ENCODE measurements at regions of chr1 and their contacts with region 1.

Region 1: GRCh38 chr1:169601093-169601881 is 15.0 kb upstream of the F5 start:
- DNase-seq: peak; percentile 41 to 57 (median 52)
- H3K4me3 ChIP-seq: no peak overlapping the region
- H3K27ac ChIP-seq: no peak overlapping the region
- H3K4me1 ChIP-seq: peaks cover 21 to 44% (median 28%) of the 10 kb centered on the region in 4 experiments
- H3K27me3 ChIP-seq: no peaks in the 10 kb centered on the region

Region 2: GRCh38 chr1:169586395-169587255 is 14.7 kb before region 1 on chr1 and contains the start of gene F5:
- CTCF ChIA-PET with region 1: interaction called, 35 read pairs
- POLR2A ChIA-PET with region 1: no interaction called
- DNase-seq: peak; percentile 78 to 89 (median 85)
- H3K4me3 ChIP-seq: peak within 1 kb of the TSS in 6 of 7 experiments; percentile 34 to 77 (median 56)
- H3K27ac ChIP-seq: no peak within 1 kb of the TSS
- H3K4me1 ChIP-seq: peaks cover 2 to 22% (median 15%) of the 10 kb centered on the region in 4 experiments
- H3K27me3 ChIP-seq: no peaks in the 10 kb centered on the region

Region 3: DNA sequence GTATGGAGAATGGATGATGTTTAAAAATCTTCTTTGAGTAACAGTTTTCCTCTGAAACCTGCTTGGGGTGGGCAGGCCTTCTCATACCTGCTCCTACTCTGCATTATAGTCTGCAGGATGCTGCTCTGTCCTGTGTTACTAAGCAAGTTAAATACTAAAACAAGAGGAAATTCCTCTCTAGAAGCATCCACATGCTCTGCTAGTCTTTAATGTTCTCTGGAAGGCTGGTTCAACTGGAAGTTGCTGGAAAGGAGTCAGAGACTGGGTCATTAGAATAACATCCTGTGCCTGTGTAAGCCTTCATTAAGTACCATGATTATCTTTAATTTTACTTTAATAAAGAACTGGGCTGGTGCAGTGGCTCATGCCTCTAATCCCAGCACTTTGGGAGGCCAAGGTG is 22.8 kb after region 1 on chr1:
- CTCF ChIA-PET with region 1: interaction called, 11 read pairs
- POLR2A ChIA-PET with region 1: no interaction called
- DNase-seq: no peak
- H3K4me3 ChIP-seq: no peak overlapping the region
- H3K27ac ChIP-seq: no peak overlapping the region
- H3K4me1 ChIP-seq: peaks cover 10 to 47% (median 24%) of the 10 kb centered on the region in 4 experiments
- H3K27me3 ChIP-seq: no peaks in the 10 kb centered on the region

Region 4: DNA sequence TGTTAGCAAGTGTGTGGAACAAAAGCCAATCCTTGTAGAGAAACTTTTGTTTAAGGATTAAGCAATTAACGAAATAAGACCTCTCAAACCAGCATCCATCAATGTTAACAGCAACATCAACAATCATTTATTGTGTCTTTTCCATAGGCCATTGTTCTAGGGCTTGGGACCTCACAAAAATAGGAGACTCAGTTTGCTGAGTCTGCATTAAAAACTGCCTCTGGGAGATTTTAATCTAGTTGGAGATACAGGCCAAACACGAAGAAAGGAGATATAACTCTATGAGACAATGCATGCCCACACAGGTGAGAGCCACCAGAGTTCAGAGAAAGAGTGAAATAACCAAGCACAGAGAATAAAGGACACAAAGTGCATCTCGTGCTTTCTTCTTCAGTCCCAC is 43.0 kb after region 1 on chr1:
- CTCF ChIA-PET with region 1: interaction called, 10 read pairs
- POLR2A ChIA-PET with region 1: no interaction called
- DNase-seq: no peak
- H3K4me3 ChIP-seq: no peak overlapping the region
- H3K27ac ChIP-seq: no peak overlapping the region
- H3K4me1 ChIP-seq: peaks cover 3 to 24% (median 13%) of the 10 kb centered on the region in 4 experiments
- H3K27me3 ChIP-seq: no peaks in the 10 kb centered on the region

Region 5: DNA sequence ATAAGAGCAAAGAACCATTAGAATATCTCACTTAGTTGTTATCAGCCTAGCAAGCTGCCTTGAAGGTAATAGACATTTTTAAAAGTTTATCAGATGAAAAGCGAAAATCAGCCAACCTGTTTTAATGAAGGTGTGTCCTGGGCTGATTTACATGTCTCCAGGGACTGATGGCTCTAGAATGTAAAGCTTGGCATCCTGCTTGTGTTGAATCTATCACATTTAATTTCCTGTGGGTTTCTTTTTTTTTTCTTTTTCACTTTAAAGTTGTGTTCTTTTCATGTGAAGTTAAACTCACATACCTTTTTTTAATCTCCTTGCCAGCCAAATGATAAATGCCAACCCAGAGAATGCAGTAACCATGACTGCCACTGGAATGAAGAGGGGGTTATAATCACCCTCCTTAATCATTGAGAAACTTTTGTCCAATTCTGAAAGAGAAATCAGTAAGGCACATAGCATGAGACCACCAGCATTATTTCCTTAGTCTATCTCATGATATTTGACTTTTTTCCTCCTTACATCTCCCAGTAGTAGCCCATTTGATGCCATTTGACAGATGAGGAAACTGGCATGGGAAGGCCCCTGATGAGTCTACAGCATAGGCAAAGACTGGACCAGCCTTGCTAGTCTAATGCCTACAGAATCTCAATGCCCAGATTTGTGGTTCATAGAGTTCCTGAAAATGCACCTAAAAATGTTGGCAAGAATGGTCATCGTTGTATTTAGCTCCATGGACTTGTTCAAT is 100.1 kb after region 1 on chr1:
- CTCF ChIA-PET with region 1: interaction called, 71 read pairs
- POLR2A ChIA-PET with region 1: interaction called, 6 read pairs
- DNase-seq: no peak
- H3K4me3 ChIP-seq: peak overlapping the region in 1 of 7 experiments; percentile 7
- H3K27ac ChIP-seq: peak overlapping the region in 1 of 2 experiments; percentile 55
- H3K4me1 ChIP-seq: peaks cover 53 to 98% (median 72%) of the 10 kb centered on the region in 4 experiments
- H3K27me3 ChIP-seq: no peaks in the 10 kb centered on the region

Region 6: DNA sequence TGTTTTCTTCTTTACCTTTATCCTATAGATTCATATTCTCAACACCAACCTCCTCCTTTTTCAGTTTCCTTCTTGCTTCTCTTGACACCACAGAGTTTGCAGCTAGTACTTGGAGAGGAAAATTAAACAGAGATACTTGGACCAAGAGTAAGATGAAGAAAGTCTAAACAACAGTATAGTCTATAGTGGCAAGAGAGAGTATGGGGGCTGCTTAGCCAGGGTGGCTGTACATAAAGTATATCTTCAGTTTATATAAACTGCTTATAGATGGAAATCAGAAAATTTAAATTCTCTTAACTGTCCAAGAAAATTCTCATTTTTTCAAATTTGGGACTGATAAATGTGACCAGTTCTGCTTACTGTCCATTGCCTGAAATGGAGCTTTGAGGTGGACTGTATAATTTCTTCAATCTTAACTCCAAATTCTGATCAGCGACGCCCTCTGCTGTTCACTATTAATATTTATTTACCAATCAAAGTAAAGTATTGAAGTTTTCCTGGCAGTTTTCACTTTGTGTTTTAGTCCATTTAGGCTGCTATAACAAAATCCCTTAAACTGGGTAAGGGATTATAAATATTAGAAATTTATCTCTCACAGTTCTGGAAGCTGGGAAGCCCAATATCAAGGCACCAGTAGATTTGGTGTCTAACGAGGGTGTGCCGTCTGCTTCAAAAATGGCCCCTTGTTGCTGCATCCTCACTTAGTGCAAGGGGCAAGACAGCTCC is 208.2 kb after region 1 on chr1:
- CTCF ChIA-PET with region 1: interaction called, 27 read pairs
- POLR2A ChIA-PET with region 1: no interaction called
- DNase-seq: peak; percentile 43 to 69 (median 58)
- H3K4me3 ChIP-seq: no peak overlapping the region
- H3K27ac ChIP-seq: no peak overlapping the region
- H3K4me1 ChIP-seq: no peaks in the 10 kb centered on the region
- H3K27me3 ChIP-seq: no peaks in the 10 kb centered on the region

Region 7: GRCh38 chr1:169833179-169833901 is 232.1 kb after region 1 on chr1:
- CTCF ChIA-PET with region 1: no interaction called
- POLR2A ChIA-PET with region 1: no interaction called
- DNase-seq: no peak
- H3K4me3 ChIP-seq: no peak overlapping the region
- H3K27ac ChIP-seq: no peak overlapping the region
- H3K4me1 ChIP-seq: no peaks in the 10 kb centered on the region
- H3K27me3 ChIP-seq: no peaks in the 10 kb centered on the region

Measured in common myeloid progenitor, CD34-positive (primary cell).